Activated naive CD4-positive, alpha-beta T cell treated with anti-CD3 and anti-CD28 coated beads for 36 hours (primary cell): ENCODE measurements at regions of chr10 and their contacts with region 1.

Region 1: GRCh38 chr10:132939957-132940790 is 2.2 kb downstream of the CFAP46 start:
- DNase-seq: peak; percentile 72
- H3K4me3 Mint-ChIP-seq: no peak overlapping the region
- H3K27ac Mint-ChIP-seq: no peak overlapping the region
- H3K4me1 Mint-ChIP-seq: peaks cover 5% of the 10 kb centered on the region
- H3K27me3 Mint-ChIP-seq: peaks cover 53% of the 10 kb centered on the region

Region 2: DNA sequence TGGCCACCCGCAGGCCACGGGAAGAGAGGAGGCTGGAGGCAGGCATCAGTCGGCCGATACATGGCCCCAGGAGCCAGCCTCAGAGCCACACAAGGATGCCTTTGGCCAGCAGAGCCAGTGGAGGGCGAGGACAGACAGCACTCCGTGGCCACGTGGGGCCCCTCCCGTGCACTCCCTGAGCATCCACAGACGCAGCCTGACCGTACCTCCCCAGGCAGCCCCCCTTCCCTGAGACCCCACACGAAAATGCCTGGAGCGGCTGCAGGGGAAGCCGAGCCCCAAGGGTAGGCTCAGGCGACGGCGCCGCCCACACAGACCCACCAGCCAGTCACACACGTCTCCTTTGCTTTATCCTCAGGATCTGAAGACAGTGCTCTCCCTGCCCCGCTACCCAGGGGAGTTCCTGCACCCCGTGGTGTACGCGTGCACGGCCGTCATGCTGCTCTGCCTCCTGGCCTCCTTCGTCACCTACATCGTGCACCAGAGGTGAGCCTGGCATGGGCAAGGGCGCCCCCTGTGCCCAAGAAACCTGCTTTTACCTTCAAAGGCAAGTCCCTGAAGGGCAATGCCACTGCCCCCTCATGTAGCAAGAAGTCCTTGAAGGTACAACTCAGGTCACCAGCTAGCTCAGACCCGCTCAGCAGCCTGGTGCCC is 156.6 kb after region 1 on chr10:
- CTCF ChIA-PET with region 1: no interaction called
- intact Hi-C with region 1: loop called (anchors 10 kb)
- DNase-seq: peak; percentile 60
- H3K4me3 Mint-ChIP-seq: no peak overlapping the region
- H3K27ac Mint-ChIP-seq: no peak overlapping the region
- H3K4me1 Mint-ChIP-seq: peaks cover 3% of the 10 kb centered on the region
- H3K27me3 Mint-ChIP-seq: peaks cover 1% of the 10 kb centered on the region

Region 3: GRCh38 chr10:133124357-133125211 is 184.4 kb after region 1 on chr10:
- CTCF ChIA-PET with region 1: interaction called, 9 read pairs
- intact Hi-C with region 1: loop called (anchors 1 kb)
- DNase-seq: peak; percentile 25
- H3K4me3 Mint-ChIP-seq: no peak overlapping the region
- H3K27ac Mint-ChIP-seq: no peak overlapping the region
- H3K4me1 Mint-ChIP-seq: peaks cover 5% of the 10 kb centered on the region
- H3K27me3 Mint-ChIP-seq: peaks cover 19% of the 10 kb centered on the region

Region 4: DNA sequence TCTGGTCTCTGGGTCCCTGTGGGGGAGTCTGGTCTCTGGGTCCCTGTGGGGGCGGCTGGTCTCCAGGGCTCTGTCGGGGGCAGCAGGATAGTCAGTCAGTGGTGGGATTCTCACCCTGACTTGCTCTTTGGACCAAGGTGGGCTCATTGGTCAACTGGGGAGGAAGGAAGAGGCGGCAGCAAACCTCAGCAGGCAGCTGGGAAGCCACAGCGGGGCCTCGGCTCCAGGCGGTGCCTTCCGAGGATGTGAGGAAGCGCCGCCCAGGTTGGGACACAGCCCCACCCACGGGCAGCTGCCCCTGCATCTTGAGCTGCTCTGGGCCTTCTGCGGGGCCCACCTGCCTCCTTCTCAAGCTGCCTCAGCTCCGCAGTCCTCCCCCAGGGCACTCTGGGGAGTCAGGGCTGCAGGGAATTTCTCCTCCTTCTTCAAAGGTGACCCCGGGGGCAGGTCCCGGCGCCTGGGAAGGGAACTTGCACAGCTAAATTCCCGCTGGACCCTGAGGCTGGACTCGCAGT is 199.4 kb after region 1 on chr10:
- CTCF ChIA-PET with region 1: no interaction called
- intact Hi-C with region 1: loop called (anchors 5 kb)
- DNase-seq: peak; percentile 3
- H3K4me3 Mint-ChIP-seq: no peak overlapping the region
- H3K27ac Mint-ChIP-seq: no peak overlapping the region
- H3K4me1 Mint-ChIP-seq: peaks cover 3% of the 10 kb centered on the region
- H3K27me3 Mint-ChIP-seq: peaks cover under 1% of the 10 kb centered on the region

Region 5: DNA sequence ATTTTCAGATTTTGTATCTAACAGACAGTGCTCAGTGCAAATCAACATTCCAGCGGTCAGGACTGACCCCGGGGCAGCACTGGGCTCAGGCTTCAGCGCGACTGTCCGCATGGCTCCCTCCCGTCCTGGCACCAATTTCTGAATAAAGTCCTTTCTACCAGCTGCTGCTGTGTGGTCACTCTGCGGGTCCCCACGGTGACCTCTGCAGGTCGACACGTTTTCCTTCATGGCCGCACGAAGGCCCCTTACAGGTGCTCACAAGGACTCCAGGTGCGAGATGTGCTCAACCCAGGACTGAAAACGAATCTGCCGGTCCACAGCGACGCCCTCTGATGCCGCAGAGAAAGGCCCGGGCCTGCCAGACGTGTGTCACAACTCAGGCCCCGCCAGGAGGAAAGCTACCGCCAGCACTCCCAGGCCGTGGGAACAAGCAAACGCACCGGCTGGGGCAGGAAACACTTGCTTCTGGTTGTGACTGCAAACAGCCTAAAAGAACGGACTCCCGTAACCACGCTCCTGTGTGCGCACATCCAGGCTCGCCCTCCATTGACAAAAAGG is 286.2 kb after region 1 on chr10:
- CTCF ChIA-PET with region 1: no interaction called
- intact Hi-C with region 1: loop called (anchors 5 kb)
- DNase-seq: peak; percentile 50
- H3K4me3 Mint-ChIP-seq: no peak overlapping the region
- H3K27ac Mint-ChIP-seq: no peak overlapping the region
- H3K4me1 Mint-ChIP-seq: peaks cover 17% of the 10 kb centered on the region
- H3K27me3 Mint-ChIP-seq: peaks cover 34% of the 10 kb centered on the region

Region 6: DNA sequence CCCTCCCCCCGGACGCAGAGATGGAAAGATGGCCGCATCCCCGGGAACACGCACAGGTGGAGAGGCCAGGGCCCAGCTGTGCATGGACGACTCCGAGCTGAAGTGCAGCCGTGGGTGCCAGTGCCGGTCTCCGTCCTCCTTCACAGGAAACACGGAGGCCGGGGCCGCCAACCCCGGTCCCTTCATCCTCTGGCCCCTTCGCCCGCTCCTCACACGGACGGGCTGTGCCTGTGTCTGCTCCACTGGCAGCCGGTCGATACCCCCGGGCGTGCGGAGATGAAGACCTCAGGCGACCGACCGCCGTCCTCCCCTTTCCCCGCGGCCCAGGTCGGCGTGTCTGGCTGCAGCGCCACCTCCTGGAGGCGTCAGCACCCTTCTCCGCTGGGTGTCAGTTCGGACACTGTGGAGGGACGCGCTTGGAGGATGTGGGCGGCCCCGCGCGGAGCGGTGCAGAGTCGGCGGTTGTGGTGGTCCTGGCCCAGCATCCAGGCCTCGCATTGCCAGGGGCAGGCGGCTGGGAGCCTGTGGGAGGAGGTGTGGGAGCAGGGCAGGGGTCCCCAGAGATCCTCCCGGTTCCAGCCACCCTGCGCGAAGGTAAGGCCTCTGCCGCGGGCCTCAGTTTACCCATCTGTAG is 378.4 kb after region 1 on chr10:
- CTCF ChIA-PET with region 1: interaction called, 5 read pairs
- intact Hi-C with region 1: loop called (anchors 2 kb)
- DNase-seq: peak; percentile 74
- H3K4me3 Mint-ChIP-seq: peak overlapping the region; percentile 59
- H3K27ac Mint-ChIP-seq: no peak overlapping the region
- H3K4me1 Mint-ChIP-seq: peaks cover 7% of the 10 kb centered on the region
- H3K27me3 Mint-ChIP-seq: peaks cover 6% of the 10 kb centered on the region